Caco-2 (cell line): ENCODE measurements at regions of chr15 and their contacts with region 1.

Region 1: DNA sequence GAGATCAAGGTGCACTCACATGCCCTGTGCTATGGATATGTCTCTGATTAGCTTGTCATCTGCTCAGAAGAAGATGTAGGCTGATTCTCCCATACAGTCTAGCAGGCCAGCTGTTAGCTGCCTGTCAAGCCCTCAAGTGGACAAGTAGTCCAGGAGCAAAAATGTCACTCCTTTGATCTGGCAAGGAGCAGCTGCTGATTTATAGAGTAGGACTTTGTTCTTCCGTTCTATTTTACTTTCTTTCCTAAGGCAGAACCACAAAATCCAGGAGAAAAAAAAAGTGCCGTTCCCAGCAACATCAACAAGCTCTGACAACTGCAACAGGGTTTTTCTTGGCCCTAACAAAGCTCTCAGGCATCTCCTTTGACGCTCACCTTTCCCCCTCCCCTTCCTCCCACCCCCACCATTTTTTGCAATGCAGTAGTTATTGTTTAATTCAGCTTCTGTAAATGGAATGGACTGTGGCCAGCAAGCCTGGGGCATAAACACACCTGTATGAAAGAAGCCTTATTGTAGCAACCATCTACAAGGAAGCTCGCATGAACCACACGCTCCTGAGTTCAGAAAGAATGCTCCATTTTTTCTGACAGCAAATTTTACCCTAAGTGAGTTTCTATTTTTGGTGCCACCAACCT is 196.3 kb downstream of the MEIS2 start:
- DNase-seq: peak; percentile 74 to 85
- H3K4me3 ChIP-seq: no peak overlapping the region
- H3K4me3 Mint-ChIP-seq: no peak overlapping the region
- H3K27ac Mint-ChIP-seq: no peak overlapping the region
- H3K4me1 ChIP-seq: peaks cover 67% of the 10 kb centered on the region
- H3K4me1 Mint-ChIP-seq: peaks cover under 1% of the 10 kb centered on the region
- H3K27me3 ChIP-seq: no peaks in the 10 kb centered on the region
- H3K27me3 Mint-ChIP-seq: no peaks in the 10 kb centered on the region
- CTCF ChIP-seq: no peak

Region 2: GRCh38 chr15:35545824-35546510 is 1358.1 kb before region 1 on chr15 and contains the start of gene DPH6:
- CTCF ChIA-PET with region 1: no interaction called
- POLR2A ChIA-PET with region 1: no interaction called
- intact Hi-C with region 1: loop called (anchors 5 kb)
- DNase-seq: peak; percentile 89 to 90
- H3K4me3 ChIP-seq: peak within 1 kb of the TSS; percentile 48
- H3K4me3 Mint-ChIP-seq: peak within 1 kb of the TSS; percentile 92
- H3K27ac Mint-ChIP-seq: peak within 1 kb of the TSS; percentile 96
- H3K4me1 ChIP-seq: peaks cover 6% of the 10 kb centered on the region; the same call in 1 of the 2 replicates
- H3K4me1 Mint-ChIP-seq: peaks cover 12% of the 10 kb centered on the region
- H3K27me3 ChIP-seq: no peaks in the 10 kb centered on the region
- H3K27me3 Mint-ChIP-seq: no peaks in the 10 kb centered on the region
- CTCF ChIP-seq: peak in 1 of 2 experiments; percentile 11
- total RNA-seq, gene DPH6: 24.0 and 27.1 TPM in 2 replicates

Region 3: DNA sequence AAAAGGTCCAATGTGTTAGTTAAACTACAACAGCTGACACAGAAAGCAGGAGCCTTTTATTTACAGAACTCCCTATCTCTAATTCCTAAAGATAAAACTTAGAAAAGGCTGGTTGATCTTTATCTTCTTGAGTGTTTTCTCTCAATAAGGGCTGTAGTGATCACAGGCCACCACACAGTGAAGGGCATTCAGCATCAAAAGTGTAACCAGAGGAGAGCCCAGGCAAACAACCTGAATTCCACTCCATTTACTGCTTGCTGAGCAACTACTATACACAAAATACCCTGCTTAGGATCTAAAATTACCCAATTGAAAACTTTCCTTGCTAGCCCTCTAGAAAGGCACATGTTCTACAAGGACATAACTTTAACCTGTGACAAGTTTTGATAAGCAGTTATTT is 73.6 kb after region 1 on chr15:
- CTCF ChIA-PET with region 1: no interaction called
- POLR2A ChIA-PET with region 1: no interaction called
- intact Hi-C with region 1: loop called (anchors 1 kb)
- DNase-seq: peak; percentile 57 to 63
- H3K4me3 ChIP-seq: no peak overlapping the region
- H3K4me3 Mint-ChIP-seq: no peak overlapping the region
- H3K27ac Mint-ChIP-seq: no peak overlapping the region
- H3K4me1 ChIP-seq: peaks cover 16% of the 10 kb centered on the region
- H3K4me1 Mint-ChIP-seq: peaks cover 7% of the 10 kb centered on the region
- H3K27me3 ChIP-seq: no peaks in the 10 kb centered on the region
- H3K27me3 Mint-ChIP-seq: no peaks in the 10 kb centered on the region
- CTCF ChIP-seq: no peak

Region 4: DNA sequence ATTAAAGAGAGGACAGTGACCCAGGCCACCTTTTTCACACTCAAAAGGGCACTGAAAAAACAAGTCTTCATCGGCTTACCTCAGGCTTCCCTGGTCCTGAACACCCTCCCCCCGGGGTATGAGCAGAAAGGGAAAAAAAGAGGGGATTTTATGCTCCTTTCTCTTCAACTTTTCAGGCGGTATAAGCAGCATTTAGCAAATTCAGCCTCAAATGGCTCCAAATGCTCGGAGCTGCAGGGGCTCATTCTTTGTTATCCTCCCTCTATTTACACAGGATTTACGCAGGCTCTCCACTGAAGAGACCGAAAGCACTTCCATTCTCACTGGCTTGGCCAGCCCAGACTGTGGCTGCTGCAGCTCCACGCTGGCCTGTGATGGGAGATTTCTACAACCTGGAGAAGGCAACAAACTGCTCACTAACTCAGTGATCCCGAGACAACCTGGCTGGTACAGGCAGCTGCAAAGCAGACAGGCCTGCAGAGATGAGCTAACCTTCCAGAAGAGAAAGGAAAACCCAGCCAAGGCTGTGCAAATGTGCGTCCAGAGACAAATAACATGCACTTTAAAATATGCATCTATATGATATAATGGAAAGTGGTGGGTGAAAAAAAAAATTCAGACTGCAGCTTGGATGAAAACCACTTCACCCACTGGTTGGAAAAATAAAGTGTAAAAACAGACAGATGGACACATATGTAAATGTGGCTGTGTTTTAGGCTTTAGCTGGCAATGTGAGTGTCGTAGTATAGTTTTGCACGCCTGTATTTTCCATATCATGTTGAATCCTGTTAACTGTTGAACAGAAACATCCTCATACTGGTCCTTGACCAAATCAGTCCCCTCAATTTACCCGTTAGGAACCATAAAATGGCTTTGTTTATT is 142.1 kb after region 1 on chr15:
- CTCF ChIA-PET with region 1: no interaction called
- POLR2A ChIA-PET with region 1: no interaction called
- intact Hi-C with region 1: loop called (anchors 5 kb)
- DNase-seq: peak; percentile 44 to 48
- H3K4me3 ChIP-seq: no peak overlapping the region
- H3K4me3 Mint-ChIP-seq: peak overlapping the region; percentile 69
- H3K27ac Mint-ChIP-seq: peak overlapping the region; percentile 36
- H3K4me1 ChIP-seq: peaks cover 29% of the 10 kb centered on the region
- H3K4me1 Mint-ChIP-seq: peaks cover 30% of the 10 kb centered on the region
- H3K27me3 ChIP-seq: no peaks in the 10 kb centered on the region
- H3K27me3 Mint-ChIP-seq: no peaks in the 10 kb centered on the region
- CTCF ChIP-seq: no peak

Region 5: GRCh38 chr15:37100109-37100965 is 196.3 kb after region 1 on chr15 and contains the start of gene MEIS2:
- CTCF ChIA-PET with region 1: interaction called, 5 read pairs
- POLR2A ChIA-PET with region 1: interaction called, 6 read pairs
- intact Hi-C with region 1: loop called (anchors 1 kb)
- DNase-seq: peak; percentile 92 to 96
- H3K4me3 ChIP-seq: peak within 1 kb of the TSS; percentile 89
- H3K4me3 Mint-ChIP-seq: peak within 1 kb of the TSS; percentile 90
- H3K27ac Mint-ChIP-seq: peak within 1 kb of the TSS; percentile 91
- H3K4me1 ChIP-seq: peaks cover 5% of the 10 kb centered on the region; the same call in 1 of the 2 replicates
- H3K4me1 Mint-ChIP-seq: peaks cover 17% of the 10 kb centered on the region
- H3K27me3 ChIP-seq: no peaks in the 10 kb centered on the region
- H3K27me3 Mint-ChIP-seq: no peaks in the 10 kb centered on the region
- CTCF ChIP-seq: no peak
- total RNA-seq, gene MEIS2: 28.5 and 28.7 TPM in 2 replicates

Region 6: DNA sequence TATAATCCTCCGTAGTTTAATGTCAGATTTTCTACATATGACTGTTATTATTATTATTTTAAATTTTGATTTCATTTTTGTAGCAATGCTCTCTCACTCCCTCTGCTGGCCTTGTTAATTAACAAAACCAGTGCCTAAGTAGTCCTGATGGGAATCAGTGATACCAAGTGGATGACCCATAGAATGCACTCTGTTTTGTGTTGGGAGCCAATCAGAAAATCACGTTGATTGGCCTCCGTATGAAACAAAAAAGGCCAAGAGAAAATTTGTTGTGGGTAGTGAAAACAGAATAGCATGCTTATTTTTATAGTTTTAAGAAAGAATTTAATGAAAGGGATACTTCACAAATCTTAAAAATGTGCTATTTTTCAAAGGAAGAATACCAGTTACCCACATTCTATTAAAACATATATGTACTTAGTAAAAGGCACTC is 230.7 kb after region 1 on chr15:
- CTCF ChIA-PET with region 1: no interaction called
- POLR2A ChIA-PET with region 1: no interaction called
- intact Hi-C with region 1: loop called (anchors 5 kb)
- DNase-seq: peak in 1 of 2 experiments; percentile 43
- H3K4me3 ChIP-seq: no peak overlapping the region
- H3K4me3 Mint-ChIP-seq: no peak overlapping the region
- H3K27ac Mint-ChIP-seq: no peak overlapping the region
- H3K4me1 ChIP-seq: peaks cover 12% of the 10 kb centered on the region; the same call in 1 of the 2 replicates
- H3K4me1 Mint-ChIP-seq: peaks cover 15% of the 10 kb centered on the region
- H3K27me3 ChIP-seq: no peaks in the 10 kb centered on the region
- H3K27me3 Mint-ChIP-seq: no peaks in the 10 kb centered on the region
- CTCF ChIP-seq: peak; percentile 51 to 67